ENCODE measurements at regions of chr12 and their contacts with region 1.

Region 1: DNA sequence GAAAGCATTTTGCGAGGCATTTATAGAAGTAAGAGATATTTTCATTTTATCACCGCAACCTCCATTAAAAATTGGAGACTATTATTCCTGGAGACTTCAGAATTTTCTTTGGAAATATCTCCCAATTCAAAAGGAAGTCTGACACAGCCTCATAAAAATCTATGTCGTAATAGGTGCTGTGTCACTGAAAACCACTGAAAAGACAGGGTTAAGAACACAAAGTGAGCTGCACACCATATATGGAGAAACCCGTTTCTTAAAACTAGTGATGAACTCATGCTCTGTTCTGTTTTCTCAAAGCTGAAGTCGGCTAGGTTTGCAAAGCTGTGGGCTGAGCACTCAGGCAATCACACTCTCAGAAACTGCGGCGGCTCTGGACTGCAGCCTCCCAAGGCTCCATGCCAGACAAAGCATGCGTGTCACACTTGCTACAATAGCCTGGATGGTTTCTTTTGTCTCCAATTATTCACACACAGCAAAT is at the start of gene GLIPR1:
- DNase-seq: peak; percentile 95
- H3K4me3 ChIP-seq: peak within 1 kb of the TSS; percentile 42
- H3K27me3 ChIP-seq: no peaks in the 10 kb centered on the region
- CTCF ChIP-seq: no peak
- polyA plus RNA-seq, gene GLIPR1: 175 and 214 TPM in 2 replicates

Region 2: GRCh38 chr12:75130825-75131224 is 349.7 kb before region 1 on chr12:
- CTCF ChIA-PET with region 1: no interaction called
- POLR2A ChIA-PET with region 1: no interaction called
- DNase-seq: no peak
- H3K4me3 ChIP-seq: no peak overlapping the region
- H3K27me3 ChIP-seq: no peaks in the 10 kb centered on the region
- CTCF ChIP-seq: no peak

Region 3: DNA sequence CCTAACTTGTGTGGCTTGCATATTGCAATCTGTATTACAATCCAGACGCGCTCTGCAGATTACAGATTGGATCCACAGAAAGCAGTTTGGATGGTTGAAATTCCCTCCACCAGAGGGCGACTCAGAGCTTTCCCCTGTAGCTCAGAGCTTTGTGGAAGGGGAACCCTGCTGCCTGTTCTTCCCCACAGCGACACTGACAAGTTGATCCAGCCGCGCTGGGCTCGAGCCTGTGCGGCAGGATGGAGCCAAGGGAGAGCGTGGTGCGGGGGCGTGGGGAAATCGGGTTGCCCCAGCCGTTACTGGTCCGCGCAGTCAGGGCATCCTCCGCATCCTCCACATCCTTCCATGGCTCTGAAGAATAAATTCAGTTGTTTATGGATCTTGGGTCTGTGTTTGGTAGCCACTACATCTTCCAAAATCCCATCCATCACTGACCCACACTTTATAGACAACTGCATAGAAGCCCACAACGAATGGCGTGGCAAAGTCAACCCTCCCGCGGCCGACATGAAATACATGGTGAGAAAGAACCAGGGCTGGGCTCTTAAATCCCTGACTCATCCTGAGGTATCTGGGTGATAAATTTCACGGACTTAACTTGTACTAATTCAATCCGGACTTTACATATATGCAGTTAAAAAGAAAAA is 146.0 kb before region 1 on chr12 and contains the start of gene GLIPR1L1:
- CTCF ChIA-PET with region 1: interaction called, 13 read pairs
- POLR2A ChIA-PET with region 1: interaction called, 3 read pairs
- DNase-seq: peak; percentile 46
- H3K4me3 ChIP-seq: peak within 1 kb of the TSS; percentile 50
- H3K27me3 ChIP-seq: no peaks in the 10 kb centered on the region
- CTCF ChIP-seq: peak; percentile 82
- polyA plus RNA-seq, gene GLIPR1L1: not detected in 2 replicates

Region 4: DNA sequence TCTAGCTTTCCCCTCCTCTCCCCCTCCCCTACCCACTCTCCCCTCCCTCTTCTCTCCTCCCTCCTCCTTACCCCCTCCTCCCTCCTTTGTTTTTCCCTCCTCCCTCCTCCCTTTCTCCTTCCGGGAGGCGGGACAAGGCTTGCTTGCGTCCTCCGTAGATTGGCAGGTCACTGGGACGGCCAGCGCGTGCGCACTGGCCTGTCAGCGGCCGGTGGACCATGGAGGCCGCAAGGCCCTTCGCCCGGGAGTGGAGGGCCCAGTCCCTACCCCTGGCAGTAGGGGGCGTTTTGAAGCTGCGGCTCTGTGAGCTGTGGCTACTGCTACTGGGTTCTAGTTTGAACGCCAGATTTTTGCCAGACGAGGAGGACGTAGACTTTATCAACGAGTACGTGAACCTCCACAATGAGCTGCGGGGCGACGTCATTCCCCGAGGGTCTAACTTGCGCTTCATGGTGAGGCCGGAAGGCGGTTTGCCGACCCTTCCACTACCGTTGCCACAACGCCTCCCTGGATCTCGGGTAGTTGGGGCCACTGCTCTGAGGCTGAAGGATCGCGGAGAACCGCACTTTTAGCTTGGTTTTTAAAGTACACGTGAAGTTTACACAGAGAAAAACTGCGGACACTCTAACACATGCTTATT is 89.5 kb before region 1 on chr12 and contains the start of gene GLIPR1L2:
- CTCF ChIA-PET with region 1: interaction called, 28 read pairs
- POLR2A ChIA-PET with region 1: interaction called, 3 read pairs
- DNase-seq: peak; percentile 83
- H3K4me3 ChIP-seq: peak within 1 kb of the TSS; percentile 53
- H3K27me3 ChIP-seq: no peaks in the 10 kb centered on the region
- CTCF ChIP-seq: peak; percentile 92
- polyA plus RNA-seq, gene GLIPR1L2: 0.21 and 0.44 TPM in 2 replicates